ENCODE measurements at regions of chr1 and their contacts with region 1.

Region 1: DNA sequence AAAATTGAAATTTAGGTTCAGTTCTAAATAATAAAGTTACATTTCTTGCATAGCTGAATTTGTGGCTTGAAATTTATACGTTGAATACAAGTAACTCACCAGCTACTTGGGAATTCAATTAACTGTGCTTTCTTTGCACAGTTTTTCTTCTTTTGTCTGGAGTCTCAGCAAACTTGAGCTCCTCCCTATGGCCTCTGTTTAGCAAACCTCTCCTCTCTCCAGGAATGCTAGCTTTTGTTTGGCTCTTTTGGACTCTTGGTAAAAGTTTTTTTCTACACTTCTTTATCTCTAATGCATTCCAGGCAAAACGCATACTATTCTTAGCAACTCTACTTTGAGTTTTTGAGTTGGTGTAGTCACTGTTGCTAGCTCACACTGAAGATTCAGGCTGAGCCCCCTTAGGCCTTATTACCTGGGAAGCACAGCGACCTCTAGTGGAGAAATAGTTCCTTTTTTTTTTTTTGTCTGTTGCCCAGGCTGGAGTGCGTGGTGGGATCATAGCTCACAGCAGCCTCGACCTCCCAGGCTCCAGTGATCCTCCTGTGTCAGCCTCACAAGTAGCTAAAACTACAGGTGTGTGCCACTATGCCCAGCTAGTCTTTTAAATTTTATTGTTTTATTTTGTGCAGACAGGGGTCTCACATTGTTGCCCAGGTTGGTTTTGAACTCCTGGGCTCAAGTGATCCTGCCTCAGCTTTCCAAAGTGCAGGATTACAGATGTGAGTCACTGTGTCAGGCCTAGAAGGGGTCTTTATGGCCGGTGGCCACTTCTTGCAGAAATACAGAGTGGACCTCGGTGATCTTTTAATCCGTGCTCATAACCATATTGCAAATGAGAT is 61.7 kb downstream of the CASQ2 start:
- DNase-seq: peak; percentile 67

Region 2: GRCh38 chr1:115609021-115609420 is 97.8 kb before region 1 on chr1:
- CTCF ChIA-PET with region 1: interaction called, 41 read pairs
- POLR2A ChIA-PET with region 1: no interaction called
- DNase-seq: no peak

Region 3: GRCh38 chr1:115669002-115669673 is 37.7 kb before region 1 on chr1:
- CTCF ChIA-PET with region 1: interaction called, 11 read pairs
- POLR2A ChIA-PET with region 1: no interaction called
- DNase-seq: no peak

Region 4: DNA sequence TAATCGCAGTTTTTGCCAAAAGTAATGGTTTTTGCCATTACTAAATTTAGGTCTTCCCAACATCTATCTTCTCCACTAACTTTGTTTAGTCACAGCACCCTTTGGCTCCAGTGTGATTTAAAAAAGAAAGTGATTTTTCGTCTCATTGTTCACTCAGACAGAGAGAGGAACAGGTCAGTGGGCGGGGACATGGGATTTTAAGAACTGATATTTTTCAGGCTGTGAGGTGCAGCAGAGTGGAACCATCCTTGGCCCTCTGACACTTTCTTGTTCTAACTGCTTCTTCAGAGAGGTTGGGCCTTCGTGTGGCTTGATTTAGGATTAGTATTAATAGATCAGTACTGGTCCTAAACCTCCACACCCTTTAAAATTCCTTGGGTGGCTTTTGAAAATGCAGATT is 22.9 kb after region 1 on chr1:
- CTCF ChIA-PET with region 1: interaction called, 10 read pairs
- POLR2A ChIA-PET with region 1: no interaction called
- DNase-seq: no peak

Region 5: GRCh38 chr1:115771847-115772457 is 65.1 kb after region 1 on chr1:
- CTCF ChIA-PET with region 1: interaction called, 10 read pairs
- POLR2A ChIA-PET with region 1: no interaction called
- DNase-seq: peak; percentile 85